ENCODE measurements at regions of chr15 and their contacts with region 1.

Region 1: GRCh38 chr15:57861036-57861638 is 154.6 kb downstream of the POLR2M start:
- DNase-seq: peak in 1 of 3 donors; percentile 56
- ATAC-seq: peak; percentile 79
- H3K4me3 ChIP-seq: no peak overlapping the region
- H3K4me1 ChIP-seq: no peaks in the 10 kb centered on the region
- CTCF ChIP-seq: peak; percentile 56

Region 2: GRCh38 chr15:57476533-57476975 is 384.6 kb before region 1 on chr15:
- intact Hi-C with region 1: no loop called
- DNase-seq: no peak
- ATAC-seq: no peak
- H3K4me3 ChIP-seq: no peak overlapping the region
- H3K4me1 ChIP-seq: no peaks in the 10 kb centered on the region
- CTCF ChIP-seq: no peak

Region 3: GRCh38 chr15:57667171-57667849 is 193.8 kb before region 1 on chr15:
- intact Hi-C with region 1: loop called in 1 of 2 experiments (anchors 10 kb)
- DNase-seq: peak in 2 of 3 donors; percentile 32 to 42
- ATAC-seq: peak; percentile 82
- H3K4me3 ChIP-seq: no peak overlapping the region
- H3K4me1 ChIP-seq: peaks cover 15% of the 10 kb centered on the region
- CTCF ChIP-seq: no peak

Region 4: GRCh38 chr15:57740048-57740447 is 121.1 kb before region 1 on chr15:
- intact Hi-C with region 1: no loop called
- DNase-seq: no peak
- ATAC-seq: no peak
- H3K4me3 ChIP-seq: no peak overlapping the region
- H3K4me1 ChIP-seq: no peaks in the 10 kb centered on the region
- CTCF ChIP-seq: no peak

Region 5: DNA sequence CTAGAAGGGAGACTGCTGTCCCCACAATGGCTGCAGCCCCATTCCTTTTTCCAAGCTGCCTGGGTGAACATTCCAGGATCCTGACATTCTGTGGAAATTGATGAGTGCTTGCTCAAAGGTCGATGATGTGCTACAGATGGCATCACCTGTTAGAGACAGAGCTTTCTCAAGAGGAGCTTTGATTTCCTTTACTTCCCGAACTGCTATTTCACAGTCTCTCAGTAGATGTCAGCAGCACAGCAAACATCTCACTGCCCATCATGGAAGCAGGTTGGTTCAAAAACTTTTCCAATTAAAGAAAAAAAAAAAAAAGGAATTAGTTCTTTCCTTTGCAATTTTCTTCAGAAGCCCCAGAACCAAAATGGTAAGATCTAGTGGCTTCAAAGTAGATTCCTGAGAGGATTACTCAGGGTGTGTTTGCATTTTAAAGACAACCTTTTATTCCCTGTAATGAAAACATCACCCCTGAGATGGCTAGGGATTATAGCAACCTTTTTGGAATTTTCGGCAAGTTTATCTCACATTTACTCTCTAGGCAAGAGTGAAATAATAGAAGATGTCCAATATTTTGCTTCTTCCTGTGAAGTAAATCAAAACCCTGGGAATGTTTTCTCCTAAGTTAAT is 109.8 kb before region 1 on chr15:
- intact Hi-C with region 1: loop called in 1 of 2 experiments (anchors 5 kb)
- DNase-seq: peak in 1 of 3 donors; percentile 26
- ATAC-seq: peak; percentile 49
- H3K4me3 ChIP-seq: no peak overlapping the region
- H3K4me1 ChIP-seq: no peaks in the 10 kb centered on the region
- CTCF ChIP-seq: no peak

Region 6: DNA sequence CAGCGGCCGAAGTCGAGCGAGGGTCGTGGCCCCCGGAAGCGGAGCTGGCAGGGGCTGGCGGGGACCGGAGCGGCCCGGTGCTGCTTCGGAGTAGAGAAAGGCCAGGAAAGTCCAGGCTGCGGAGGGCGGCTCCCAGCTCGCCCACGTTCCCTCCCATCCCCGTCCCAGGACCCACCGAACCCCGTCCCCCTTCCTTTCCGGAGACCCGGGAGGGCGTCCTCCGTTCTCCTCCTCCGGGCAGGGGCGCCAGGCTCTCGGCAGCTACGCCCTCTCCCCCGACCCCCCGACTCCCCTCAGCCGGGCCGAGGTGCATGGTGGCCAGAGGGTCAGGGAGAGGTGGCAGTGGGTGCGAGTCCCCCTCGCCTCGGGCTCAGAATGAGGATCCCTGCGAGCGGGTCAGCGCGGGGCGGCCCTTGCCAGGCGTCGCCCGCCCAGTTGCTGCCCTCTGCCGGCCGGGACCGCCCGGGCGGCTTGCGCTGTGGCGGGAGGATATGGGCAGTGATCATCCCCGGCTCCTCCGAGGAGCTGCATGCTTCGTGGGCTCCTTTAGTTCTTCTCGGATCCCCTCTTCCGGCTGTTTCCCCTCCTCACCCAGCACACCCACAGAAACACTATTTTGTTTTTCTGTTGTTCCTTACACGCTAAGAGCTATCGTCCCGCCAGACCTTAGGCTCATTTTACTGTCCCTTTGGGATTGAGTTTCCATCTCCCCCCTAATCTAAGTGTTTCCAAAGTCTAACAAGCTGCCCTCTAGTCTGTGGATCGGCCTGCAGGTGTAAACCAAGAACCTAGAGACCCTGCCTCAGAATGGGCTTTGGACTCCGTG is 205.1 kb after region 1 on chr15:
- intact Hi-C with region 1: loop called (anchors 5 kb)
- DNase-seq: peak; percentile 65 to 82 (median 72)
- ATAC-seq: peak; percentile 98
- H3K4me3 ChIP-seq: no peak overlapping the region
- H3K4me1 ChIP-seq: peaks cover 15% of the 10 kb centered on the region
- CTCF ChIP-seq: peak; percentile 80